ENCODE measurements at regions of chr14 and their contacts with region 1.

Region 1: GRCh38 chr14:21103710-21104447 is 3.0 kb downstream of the TMEM253 start:
- DNase-seq: peak; percentile 91
- ATAC-seq: peak; percentile 88
- H3K4me3 Mint-ChIP-seq: peak overlapping the region; percentile 79
- H3K27ac Mint-ChIP-seq: peak overlapping the region; percentile 90
- H3K4me1 Mint-ChIP-seq: peaks cover 21% of the 10 kb centered on the region
- H3K27me3 Mint-ChIP-seq: peaks cover 11% of the 10 kb centered on the region
- CTCF ChIP-seq: no peak

Region 2: GRCh38 chr14:20454516-20455354 is 649.1 kb before region 1 on chr14 and contains the starts of genes APEX1 and OSGEP:
- CTCF ChIA-PET with region 1: no interaction called
- POLR2A ChIA-PET with region 1: no interaction called
- intact Hi-C with region 1: loop called (anchors 10 kb)
- DNase-seq: peak; percentile 88
- ATAC-seq: peak; percentile 88
- H3K4me3 Mint-ChIP-seq: peak within 1 kb of the TSS; percentile 56
- H3K27ac Mint-ChIP-seq: no peak within 1 kb of the TSS
- H3K4me1 Mint-ChIP-seq: peaks cover 35% of the 10 kb centered on the region
- H3K27me3 Mint-ChIP-seq: no peaks in the 10 kb centered on the region
- CTCF ChIP-seq: no peak
- total RNA-seq, gene APEX1: 215 and 231 TPM in 2 replicates
- total RNA-seq, gene OSGEP: 98.3 and 112 TPM in 2 replicates

Region 3: DNA sequence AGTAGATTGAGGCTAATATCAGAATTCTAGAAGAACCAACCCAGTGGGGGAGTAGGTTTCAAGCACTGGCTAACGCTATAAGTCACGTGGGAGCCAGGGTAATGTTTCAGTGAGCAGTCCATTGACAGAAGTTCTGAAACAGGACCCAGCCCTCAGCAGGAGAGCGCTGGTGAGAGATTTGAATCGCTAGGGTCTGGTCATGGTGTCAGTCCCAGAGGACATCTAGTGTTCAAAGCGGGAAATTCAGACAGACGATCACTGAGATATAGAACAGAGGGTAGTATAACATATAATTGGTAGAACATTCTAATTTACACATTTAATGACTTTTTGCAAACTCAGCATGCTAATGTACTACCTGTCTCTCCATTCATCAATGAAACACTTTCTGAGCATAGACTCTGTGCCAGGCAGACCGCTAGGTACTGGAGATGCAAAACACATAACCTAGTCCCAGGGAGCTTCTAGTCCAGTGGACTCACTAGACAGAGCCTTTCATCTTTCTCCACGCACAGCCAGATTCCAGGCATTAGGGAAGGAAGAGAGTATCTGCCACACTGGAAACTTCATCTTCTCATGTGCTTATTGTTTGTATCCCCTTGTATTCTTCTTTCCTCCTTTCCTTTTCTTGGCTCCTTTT is 248.1 kb before region 1 on chr14:
- CTCF ChIA-PET with region 1: no interaction called
- POLR2A ChIA-PET with region 1: no interaction called
- intact Hi-C with region 1: loop called (anchors 5 kb)
- DNase-seq: peak; percentile 22
- ATAC-seq: peak; percentile 99
- H3K4me3 Mint-ChIP-seq: no peak overlapping the region
- H3K27ac Mint-ChIP-seq: no peak overlapping the region
- H3K4me1 Mint-ChIP-seq: peaks cover 4% of the 10 kb centered on the region
- H3K27me3 Mint-ChIP-seq: peaks cover 22% of the 10 kb centered on the region
- CTCF ChIP-seq: peak; percentile 56

Region 4: DNA sequence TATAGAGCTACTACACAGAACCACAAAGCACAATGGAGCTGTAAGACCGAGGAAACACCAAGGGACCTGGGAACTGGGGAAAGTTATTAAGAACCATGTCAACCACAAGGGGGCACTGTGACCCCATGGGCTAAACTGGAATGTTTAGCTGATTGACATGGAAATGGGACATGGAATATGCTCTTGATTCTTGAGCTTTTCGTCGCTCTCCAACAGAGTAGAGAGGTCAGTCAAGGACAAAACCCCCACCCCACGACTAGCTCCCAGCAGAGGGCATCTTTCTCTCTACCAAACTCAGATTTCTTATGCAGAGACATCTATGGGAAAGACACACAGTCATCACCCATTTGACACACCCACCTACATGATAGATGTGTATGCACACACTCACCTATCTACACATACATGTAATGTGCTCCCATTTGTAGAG is 89.1 kb before region 1 on chr14:
- CTCF ChIA-PET with region 1: interaction called, 257 read pairs
- POLR2A ChIA-PET with region 1: interaction called, 19 read pairs
- intact Hi-C with region 1: loop called (anchors 1 kb)
- DNase-seq: peak; percentile 52
- ATAC-seq: peak; percentile 64
- H3K4me3 Mint-ChIP-seq: no peak overlapping the region
- H3K27ac Mint-ChIP-seq: no peak overlapping the region
- H3K4me1 Mint-ChIP-seq: no peaks in the 10 kb centered on the region
- H3K27me3 Mint-ChIP-seq: peaks cover 37% of the 10 kb centered on the region
- CTCF ChIP-seq: peak; percentile 48

Region 5: GRCh38 chr14:21049271-21049673 is 54.6 kb before region 1 on chr14:
- CTCF ChIA-PET with region 1: no interaction called
- POLR2A ChIA-PET with region 1: no interaction called
- intact Hi-C with region 1: no loop called
- DNase-seq: no peak
- ATAC-seq: no peak
- H3K4me3 Mint-ChIP-seq: no peak overlapping the region
- H3K27ac Mint-ChIP-seq: no peak overlapping the region
- H3K4me1 Mint-ChIP-seq: no peaks in the 10 kb centered on the region
- H3K27me3 Mint-ChIP-seq: peaks cover 17% of the 10 kb centered on the region
- CTCF ChIP-seq: no peak

Region 6: GRCh38 chr14:21071225-21072030 is 32.5 kb before region 1 on chr14:
- CTCF ChIA-PET with region 1: interaction called, 146 read pairs
- POLR2A ChIA-PET with region 1: interaction called, 29 read pairs
- intact Hi-C with region 1: loop called (anchors 1 kb)
- DNase-seq: peak; percentile 63
- ATAC-seq: peak; percentile 72
- H3K4me3 Mint-ChIP-seq: peak overlapping the region; percentile 83
- H3K27ac Mint-ChIP-seq: peak overlapping the region; percentile 41
- H3K4me1 Mint-ChIP-seq: peaks cover 42% of the 10 kb centered on the region
- H3K27me3 Mint-ChIP-seq: peaks cover 11% of the 10 kb centered on the region
- CTCF ChIP-seq: no peak

Region 7: DNA sequence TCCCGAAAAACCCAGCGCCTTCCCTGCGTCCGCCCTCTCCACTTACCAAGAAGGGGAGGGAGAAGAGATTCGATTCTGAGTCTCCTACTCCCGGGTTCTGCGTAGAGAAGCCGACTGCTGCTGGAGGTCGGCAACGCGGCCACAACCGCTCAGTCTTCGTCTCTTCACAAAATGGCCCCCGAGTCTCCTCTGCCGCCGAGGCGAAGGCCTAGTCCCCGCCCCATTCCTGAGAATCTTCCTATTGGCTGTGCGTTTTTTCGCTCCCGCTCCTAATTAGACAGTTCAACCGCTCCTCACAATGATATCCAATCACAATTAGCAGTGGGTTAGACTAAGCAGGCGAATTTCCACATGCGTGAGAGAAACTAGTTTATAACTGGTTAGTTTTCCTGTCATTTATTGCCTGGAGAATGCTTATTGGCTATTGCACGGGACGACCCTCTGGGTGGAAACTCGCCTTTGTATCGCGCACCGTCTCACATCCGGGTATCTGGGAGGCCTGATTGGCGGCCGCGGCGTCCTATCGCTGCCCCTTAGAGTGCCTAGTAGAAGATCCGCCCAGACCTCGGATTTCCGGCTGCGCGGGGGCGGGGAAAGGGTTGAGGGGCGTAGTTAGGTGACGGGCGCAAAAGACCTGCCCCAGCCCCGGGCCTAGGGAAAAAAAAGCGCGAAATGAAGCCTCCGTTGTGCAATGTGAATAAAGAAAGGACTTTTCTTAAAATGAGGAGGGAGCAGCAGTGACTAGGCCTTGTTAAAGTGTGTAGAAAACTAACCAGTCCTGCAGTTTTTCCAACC is 165.6 kb after region 1 on chr14 and contains the start of gene HNRNPC:
- CTCF ChIA-PET with region 1: no interaction called
- POLR2A ChIA-PET with region 1: no interaction called
- intact Hi-C with region 1: loop called (anchors 10 kb)
- DNase-seq: peak; percentile 100
- ATAC-seq: peak; percentile 87
- H3K4me3 Mint-ChIP-seq: peak within 1 kb of the TSS; percentile 100
- H3K27ac Mint-ChIP-seq: peak within 1 kb of the TSS; percentile 100
- H3K4me1 Mint-ChIP-seq: peaks cover 48% of the 10 kb centered on the region
- H3K27me3 Mint-ChIP-seq: no peaks in the 10 kb centered on the region
- CTCF ChIP-seq: no peak
- total RNA-seq, gene HNRNPC: 653 and 683 TPM in 2 replicates

Region 8: GRCh38 chr14:22039938-22040775 is 936.3 kb after region 1 on chr14:
- CTCF ChIA-PET with region 1: no interaction called
- POLR2A ChIA-PET with region 1: no interaction called
- intact Hi-C with region 1: no loop called
- DNase-seq: no peak
- ATAC-seq: no peak
- H3K4me3 Mint-ChIP-seq: no peak overlapping the region
- H3K27ac Mint-ChIP-seq: no peak overlapping the region
- H3K4me1 Mint-ChIP-seq: no peaks in the 10 kb centered on the region
- H3K27me3 Mint-ChIP-seq: peaks cover 36% of the 10 kb centered on the region
- CTCF ChIP-seq: no peak

Measured in activated B cell treated with CpG ODN at 0.5 μM for 24 hours (primary cell).